Ascending aorta (tissue), 2 donors: ENCODE measurements at regions of chr9 and their contacts with region 1.

Region 1: GRCh38 chr9:75027187-75028107 is 646 bp downstream of the CARNMT1 start:
- DNase-seq: peak in 1 of 2 donors; percentile 80
- H3K4me3 ChIP-seq: peak overlapping the region; percentile 78 to 98
- H3K27ac ChIP-seq: peak overlapping the region; percentile 84 to 88
- H3K4me1 ChIP-seq: peaks cover 2 to 11% of the 10 kb centered on the region in 2 donors
- H3K27me3 ChIP-seq: no peaks in the 10 kb centered on the region
- CTCF ChIP-seq: no peak

Region 2: DNA sequence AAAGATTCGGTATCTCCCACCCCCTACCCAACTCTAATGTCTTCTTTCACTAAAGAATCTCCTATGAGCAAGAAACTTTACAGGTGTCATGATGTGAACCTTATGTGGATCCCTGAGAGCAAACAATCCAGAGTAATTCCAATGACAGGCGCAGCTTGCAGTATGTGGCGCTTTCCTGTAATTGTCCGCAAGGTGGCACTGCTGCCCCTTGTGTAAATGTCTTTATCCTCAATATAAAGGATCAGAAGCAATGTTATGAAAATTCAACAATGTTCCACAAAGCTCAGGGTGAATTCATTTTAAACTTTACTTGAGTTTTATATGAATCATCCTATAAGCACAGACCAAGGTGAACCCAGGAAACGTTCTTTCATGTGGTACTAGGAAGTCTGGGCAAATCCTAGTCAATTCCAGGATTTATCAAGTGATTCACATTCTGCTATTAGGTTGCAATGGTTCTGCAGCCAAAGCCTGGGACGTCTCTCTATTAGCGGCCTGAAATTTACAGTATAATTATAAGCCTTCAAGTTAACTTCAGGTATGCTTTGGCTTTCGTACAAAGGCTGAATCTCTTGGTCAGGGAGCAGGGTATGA is 253.5 kb before region 1 on chr9:
- intact Hi-C with region 1: no loop called
- DNase-seq: peak in 1 of 2 donors; percentile 85
- H3K4me3 ChIP-seq: no peak overlapping the region
- H3K27ac ChIP-seq: no peak overlapping the region
- H3K4me1 ChIP-seq: no peaks in the 10 kb centered on the region
- H3K27me3 ChIP-seq: no peaks in the 10 kb centered on the region
- CTCF ChIP-seq: peak; percentile 65 to 94 (median 82)

Region 3: DNA sequence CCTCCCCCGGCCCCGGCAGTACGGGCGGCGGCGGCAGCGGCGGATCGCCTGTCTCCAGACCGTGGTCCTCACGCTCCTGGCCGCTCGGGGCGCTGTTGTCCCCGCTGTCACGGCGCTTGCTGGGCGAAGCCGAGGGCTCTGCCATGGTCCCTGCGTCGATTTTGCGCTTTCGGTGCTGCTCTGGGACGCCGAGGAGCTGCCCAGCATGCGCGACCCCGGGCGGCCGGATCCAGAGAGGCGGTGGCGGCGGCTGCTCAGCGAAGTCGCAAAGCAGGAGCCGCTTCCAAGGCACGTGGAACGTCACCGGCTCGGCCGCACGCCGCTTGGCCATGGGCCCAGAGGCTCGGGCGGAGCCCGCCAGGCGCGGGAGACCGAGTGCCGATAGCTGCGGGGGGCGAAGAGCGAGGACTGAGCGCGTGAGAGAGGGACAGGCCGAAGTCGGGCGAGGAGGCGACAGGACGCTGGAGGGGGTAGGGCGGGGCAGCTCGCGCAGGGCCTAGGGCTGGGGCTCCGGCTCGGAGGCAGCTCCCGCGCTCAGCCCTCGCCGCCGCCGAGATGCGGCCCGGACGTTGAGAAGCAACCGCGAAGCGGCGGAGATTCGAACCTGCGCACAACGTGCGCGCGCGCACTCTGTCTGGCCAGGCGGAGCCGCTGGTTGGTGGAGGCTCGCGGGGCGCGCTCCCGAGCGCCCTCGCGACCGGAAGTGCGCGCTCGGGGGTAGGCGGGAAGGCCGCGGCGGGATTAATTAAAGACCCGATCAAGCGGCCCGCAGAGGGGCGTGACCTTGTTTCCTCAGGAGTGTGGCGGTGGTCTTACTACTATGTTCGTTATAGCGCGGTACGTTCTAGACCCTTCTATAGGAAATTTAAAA is 74.9 kb before region 1 on chr9 and contains the start of gene C9orf40:
- intact Hi-C with region 1: loop called (anchors 1 kb)
- DNase-seq: peak; percentile 18 to 93
- H3K4me3 ChIP-seq: peak within 1 kb of the TSS; percentile 80 to 89
- H3K27ac ChIP-seq: peak within 1 kb of the TSS; percentile 97 to 98
- H3K4me1 ChIP-seq: no peaks in the 10 kb centered on the region
- H3K27me3 ChIP-seq: no peaks in the 10 kb centered on the region
- CTCF ChIP-seq: peak; percentile 74 to 88 (median 78)
- total RNA-seq, gene C9orf40: 15.2 TPM

Region 4: DNA sequence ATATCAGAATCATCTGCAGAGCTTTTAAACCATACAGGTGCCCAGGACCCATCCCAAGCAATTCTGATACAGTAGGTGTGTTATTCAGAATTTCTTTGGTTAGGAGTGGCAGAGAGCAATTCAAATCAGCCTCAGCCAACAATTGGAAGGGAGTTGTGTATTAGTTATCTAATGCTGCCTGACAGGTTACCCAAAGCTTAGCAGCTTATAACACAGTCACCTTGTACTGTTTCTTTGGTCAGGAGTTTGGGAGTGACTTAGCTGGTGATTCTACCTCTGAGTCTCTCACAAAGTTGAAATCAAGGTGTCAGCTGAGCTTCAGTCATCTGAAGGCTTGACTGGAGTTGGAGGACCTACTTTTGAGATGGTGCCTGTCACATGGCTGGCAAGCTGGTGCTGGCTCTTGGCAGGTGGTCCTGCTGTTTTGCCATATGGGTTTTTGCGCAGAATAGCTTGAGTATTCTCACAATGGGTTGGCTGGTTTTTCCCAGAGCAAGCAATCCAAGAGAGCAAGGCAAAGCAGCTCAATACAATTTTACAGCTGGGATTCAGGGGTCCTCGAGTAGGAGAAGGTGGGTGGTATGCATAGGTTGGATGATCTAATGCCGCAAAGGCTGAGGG is 19.4 kb after region 1 on chr9:
- intact Hi-C with region 1: no loop called
- DNase-seq: no peak
- H3K4me3 ChIP-seq: no peak overlapping the region
- H3K27ac ChIP-seq: no peak overlapping the region
- H3K4me1 ChIP-seq: no peaks in the 10 kb centered on the region
- H3K27me3 ChIP-seq: no peaks in the 10 kb centered on the region
- CTCF ChIP-seq: no peak